Right cardiac atrium (tissue), 5 donors: ENCODE measurements at regions of chr11 and their contacts with region 1.

Region 1: GRCh38 chr11:61129639-61130523 is 27.6 kb downstream of the CD5 start:
- DNase-seq: peak; percentile 84 to 94 (median 94)
- ATAC-seq: peak; percentile 79 to 85
- H3K4me3 ChIP-seq: no peak overlapping the region
- H3K27ac ChIP-seq: no peak overlapping the region
- H3K4me1 ChIP-seq: no peaks in the 10 kb centered on the region
- H3K27me3 ChIP-seq: no peaks in the 10 kb centered on the region

Region 2: DNA sequence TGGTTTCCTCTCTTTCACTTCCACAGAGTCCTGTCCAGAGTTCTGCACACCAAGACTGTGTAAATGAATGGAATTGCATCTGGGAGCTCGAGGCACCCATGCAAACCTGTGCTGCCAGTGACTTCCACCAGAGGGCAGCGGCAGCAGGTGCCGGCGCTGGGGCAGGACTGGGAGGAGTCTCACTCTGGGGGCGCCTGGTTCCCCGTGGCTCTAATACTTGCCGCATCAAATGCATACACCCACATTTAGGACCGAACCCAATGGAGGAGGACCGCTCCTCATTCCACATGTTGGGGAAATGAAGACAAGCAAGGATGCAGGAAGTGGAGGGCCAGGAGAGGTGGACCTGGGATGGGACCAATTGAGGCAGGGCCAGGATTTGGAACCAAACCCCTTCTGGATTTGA is 159.5 kb before region 1 on chr11:
- intact Hi-C with region 1: loop called in 1 of 4 experiments (anchors 1 kb)
- DNase-seq: peak; percentile 58 to 85 (median 84)
- ATAC-seq: peak; percentile 67 to 82
- H3K4me3 ChIP-seq: no peak overlapping the region
- H3K27ac ChIP-seq: no peak overlapping the region
- H3K4me1 ChIP-seq: no peaks in the 10 kb centered on the region
- H3K27me3 ChIP-seq: no peaks in the 10 kb centered on the region